ENCODE measurements at regions of chr19 and their contacts with region 1.

Region 1: DNA sequence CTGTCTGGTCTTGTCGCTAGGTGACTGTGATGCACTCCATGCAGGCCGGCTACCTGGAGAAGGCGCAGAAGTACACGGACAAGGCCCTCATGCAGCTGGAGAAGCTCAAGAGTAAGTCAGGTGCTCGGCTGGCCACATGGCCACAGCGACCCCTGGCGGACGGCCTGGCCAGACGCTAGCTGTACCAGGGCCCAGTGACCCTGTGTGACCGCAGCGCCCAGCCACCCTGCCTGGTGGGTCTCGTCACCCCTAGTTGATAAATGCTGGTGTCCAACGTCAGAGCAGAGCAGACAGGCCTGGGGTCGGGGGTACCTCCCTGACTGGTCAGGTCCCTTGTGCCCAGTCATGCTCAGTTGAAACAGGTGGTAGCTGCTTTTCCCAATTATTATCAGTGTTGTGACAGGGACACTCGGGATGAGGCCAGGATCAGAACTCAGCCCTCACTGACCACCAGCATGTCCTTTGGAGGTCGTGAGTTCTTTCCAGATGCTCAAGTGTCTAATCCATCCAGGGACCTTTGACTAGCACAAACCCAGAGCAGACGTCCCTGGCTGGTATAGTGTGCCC is 22.2 kb downstream of the MAU2 start:
- DNase-seq: peak; percentile 66
- H3K4me3 Mint-ChIP-seq: no peak overlapping the region
- H3K27ac Mint-ChIP-seq: no peak overlapping the region
- H3K4me1 Mint-ChIP-seq: no peaks in the 10 kb centered on the region
- H3K27me3 Mint-ChIP-seq: no peaks in the 10 kb centered on the region
- CTCF ChIP-seq: peak; percentile 89

Region 2: DNA sequence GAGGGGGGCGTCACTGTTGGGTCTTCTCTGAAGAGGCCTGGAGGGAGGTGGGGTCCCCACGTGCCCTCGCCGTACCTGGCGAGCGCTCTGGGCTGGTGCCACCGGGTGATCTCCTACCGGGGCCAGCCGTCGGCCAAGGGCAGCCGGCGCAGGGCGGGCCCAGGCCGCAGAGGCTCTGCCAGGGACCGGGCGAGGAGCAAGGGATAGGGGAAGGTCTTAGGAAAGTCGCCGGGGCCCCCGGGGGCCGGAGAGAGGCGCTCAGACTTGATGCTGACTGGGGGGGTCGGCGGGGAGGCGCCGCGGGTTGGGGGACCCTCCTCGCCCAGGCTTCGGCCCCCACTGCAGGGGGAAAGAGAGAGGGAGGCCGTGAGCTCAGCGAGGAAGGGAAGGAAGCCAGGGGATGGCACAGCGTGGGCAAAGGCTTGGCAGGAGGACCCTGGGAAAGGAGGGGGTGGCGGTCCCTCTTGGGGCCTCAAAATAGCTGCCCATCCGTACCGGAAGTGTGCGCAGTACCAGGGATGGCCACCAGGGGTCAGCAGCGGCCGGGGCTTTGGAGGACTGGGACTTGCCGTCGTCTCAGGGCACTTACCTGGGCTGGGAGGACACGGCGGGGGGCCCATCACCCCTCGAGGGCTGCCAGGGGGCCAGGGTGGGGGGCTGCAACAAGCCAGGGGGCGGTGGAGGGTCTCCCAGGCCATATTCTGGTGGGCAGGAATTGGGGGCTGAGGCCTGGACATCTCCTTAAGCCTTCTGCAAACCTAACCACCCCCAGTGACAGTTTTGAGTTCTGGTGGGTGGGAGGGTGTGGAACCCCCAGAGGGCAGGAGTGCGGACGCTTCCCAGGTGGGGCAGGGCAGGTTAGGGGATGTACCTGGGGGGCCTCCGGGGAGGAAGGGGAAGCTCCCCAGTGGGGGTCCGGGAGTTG is 196.9 kb before region 1 on chr19:
- CTCF ChIA-PET with region 1: interaction called, 4 read pairs
- POLR2A ChIA-PET with region 1: no interaction called
- intact Hi-C with region 1: loop called (anchors 1 kb)
- DNase-seq: peak; percentile 73
- H3K4me3 Mint-ChIP-seq: no peak overlapping the region
- H3K27ac Mint-ChIP-seq: no peak overlapping the region
- H3K4me1 Mint-ChIP-seq: no peaks in the 10 kb centered on the region
- H3K27me3 Mint-ChIP-seq: no peaks in the 10 kb centered on the region
- CTCF ChIP-seq: peak; percentile 95

Region 3: GRCh38 chr19:19276386-19276785 is 66.5 kb before region 1 on chr19:
- CTCF ChIA-PET with region 1: no interaction called
- POLR2A ChIA-PET with region 1: no interaction called
- intact Hi-C with region 1: no loop called
- DNase-seq: no peak
- H3K4me3 Mint-ChIP-seq: no peak overlapping the region
- H3K27ac Mint-ChIP-seq: no peak overlapping the region
- H3K4me1 Mint-ChIP-seq: no peaks in the 10 kb centered on the region
- H3K27me3 Mint-ChIP-seq: peaks cover 11% of the 10 kb centered on the region
- CTCF ChIP-seq: no peak

Region 4: GRCh38 chr19:19354932-19355331 is 12.1 kb after region 1 on chr19:
- CTCF ChIA-PET with region 1: interaction called, 35 read pairs
- POLR2A ChIA-PET with region 1: interaction called, 3 read pairs
- intact Hi-C with region 1: no loop called
- DNase-seq: no peak
- H3K4me3 Mint-ChIP-seq: no peak overlapping the region
- H3K27ac Mint-ChIP-seq: no peak overlapping the region
- H3K4me1 Mint-ChIP-seq: no peaks in the 10 kb centered on the region
- H3K27me3 Mint-ChIP-seq: no peaks in the 10 kb centered on the region
- CTCF ChIP-seq: no peak

Region 5: DNA sequence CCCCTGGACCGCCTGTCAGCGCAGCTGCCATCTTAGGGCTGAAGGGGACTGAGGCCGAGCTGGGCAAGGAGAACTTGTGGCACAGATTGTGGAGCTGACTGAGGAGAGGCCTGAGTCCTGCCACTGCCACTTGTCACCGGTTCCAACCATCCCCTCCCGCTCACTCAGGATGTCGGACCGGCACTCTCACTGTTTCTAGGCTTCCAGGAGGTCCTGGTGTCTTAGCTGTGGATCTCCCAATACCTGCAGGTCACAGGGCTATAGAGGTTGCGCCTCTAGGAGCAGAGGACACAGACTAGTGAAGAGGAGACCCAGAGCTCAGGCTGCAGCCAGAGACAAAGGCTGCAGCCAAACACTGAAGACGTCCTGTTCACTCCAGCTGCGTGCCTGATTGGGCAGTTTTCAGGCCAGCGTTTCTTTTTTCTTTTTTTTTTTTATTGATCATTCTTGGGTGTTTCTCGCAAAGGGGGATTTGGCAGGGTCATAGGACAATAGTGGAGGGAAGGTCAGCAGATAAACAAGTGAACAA is 808.8 kb after region 1 on chr19:
- CTCF ChIA-PET with region 1: no interaction called
- POLR2A ChIA-PET with region 1: no interaction called
- intact Hi-C with region 1: no loop called
- DNase-seq: no peak
- H3K4me3 Mint-ChIP-seq: no peak overlapping the region
- H3K27ac Mint-ChIP-seq: no peak overlapping the region
- H3K4me1 Mint-ChIP-seq: no peaks in the 10 kb centered on the region
- H3K27me3 Mint-ChIP-seq: no peaks in the 10 kb centered on the region
- CTCF ChIP-seq: no peak

Measured in MCF 10A (cell line).